Naive thymus-derived CD4-positive, alpha-beta T cell (primary cell): ENCODE measurements at regions of chr1 and their contacts with region 1.

Region 1: GRCh38 chr1:169809370-169810095 is 14.8 kb upstream of the METTL18 start:
- DNase-seq: peak in 6 of 9 donors; percentile 3 to 44 (median 33)
- ATAC-seq: peak; percentile 65
- H3K4me3 ChIP-seq: no peak overlapping the region
- H3K4me3 Mint-ChIP-seq: no peak overlapping the region
- H3K27ac ChIP-seq: no peak overlapping the region
- H3K27ac Mint-ChIP-seq: no peak overlapping the region
- H3K4me1 ChIP-seq: no peaks in the 10 kb centered on the region
- H3K4me1 Mint-ChIP-seq: peaks cover 0 to 16% (median 0%) of the 10 kb centered on the region in 7 donors
- H3K27me3 ChIP-seq: no peaks in the 10 kb centered on the region
- H3K27me3 Mint-ChIP-seq: no peaks in the 10 kb centered on the region

Region 2: DNA sequence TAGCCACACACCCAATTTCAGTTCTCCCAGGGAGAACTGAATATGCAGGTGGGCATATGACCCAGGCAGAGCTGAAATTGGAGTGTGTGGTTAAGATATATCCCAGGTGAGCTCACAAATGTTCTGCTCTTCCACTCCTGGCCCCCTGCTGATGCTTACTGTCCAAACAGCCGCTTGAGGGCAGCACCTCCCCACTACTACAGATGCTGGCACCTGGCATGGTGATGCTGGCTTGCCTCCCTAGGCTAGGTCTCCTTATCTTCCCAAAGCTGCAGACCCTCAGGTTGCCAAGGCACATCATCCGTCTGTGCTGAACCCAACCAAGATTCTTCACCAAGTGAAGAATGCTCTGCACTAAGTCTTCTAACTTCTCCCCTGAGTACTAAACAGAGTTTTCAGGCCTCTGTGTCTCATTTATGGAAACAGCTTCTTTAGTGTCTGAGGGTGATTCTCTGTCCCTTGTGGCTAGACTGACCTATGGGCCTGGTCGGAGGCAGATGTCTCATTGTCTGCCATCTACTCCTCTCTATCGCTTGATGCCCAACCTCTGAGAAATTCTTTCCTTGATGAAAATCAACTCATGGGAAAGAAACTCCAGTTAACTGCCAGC is 1205.9 kb before region 1 on chr1:
- CTCF ChIA-PET with region 1: no interaction called
- POLR2A ChIA-PET with region 1: no interaction called
- intact Hi-C with region 1: loop called in 1 of 2 experiments (anchors 5 kb)
- DNase-seq: peak; percentile 42 to 72 (median 58)
- ATAC-seq: peak; percentile 89
- H3K4me3 ChIP-seq: no peak overlapping the region
- H3K4me3 Mint-ChIP-seq: no peak overlapping the region
- H3K27ac ChIP-seq: no peak overlapping the region
- H3K27ac Mint-ChIP-seq: no peak overlapping the region
- H3K4me1 ChIP-seq: no peaks in the 10 kb centered on the region
- H3K4me1 Mint-ChIP-seq: peaks cover 0 to 7% (median 0%) of the 10 kb centered on the region in 7 donors
- H3K27me3 ChIP-seq: peaks cover 0 to 4% of the 10 kb centered on the region in 2 donors
- H3K27me3 Mint-ChIP-seq: peaks cover 0 to 30% (median 1%) of the 10 kb centered on the region in 5 donors

Region 3: DNA sequence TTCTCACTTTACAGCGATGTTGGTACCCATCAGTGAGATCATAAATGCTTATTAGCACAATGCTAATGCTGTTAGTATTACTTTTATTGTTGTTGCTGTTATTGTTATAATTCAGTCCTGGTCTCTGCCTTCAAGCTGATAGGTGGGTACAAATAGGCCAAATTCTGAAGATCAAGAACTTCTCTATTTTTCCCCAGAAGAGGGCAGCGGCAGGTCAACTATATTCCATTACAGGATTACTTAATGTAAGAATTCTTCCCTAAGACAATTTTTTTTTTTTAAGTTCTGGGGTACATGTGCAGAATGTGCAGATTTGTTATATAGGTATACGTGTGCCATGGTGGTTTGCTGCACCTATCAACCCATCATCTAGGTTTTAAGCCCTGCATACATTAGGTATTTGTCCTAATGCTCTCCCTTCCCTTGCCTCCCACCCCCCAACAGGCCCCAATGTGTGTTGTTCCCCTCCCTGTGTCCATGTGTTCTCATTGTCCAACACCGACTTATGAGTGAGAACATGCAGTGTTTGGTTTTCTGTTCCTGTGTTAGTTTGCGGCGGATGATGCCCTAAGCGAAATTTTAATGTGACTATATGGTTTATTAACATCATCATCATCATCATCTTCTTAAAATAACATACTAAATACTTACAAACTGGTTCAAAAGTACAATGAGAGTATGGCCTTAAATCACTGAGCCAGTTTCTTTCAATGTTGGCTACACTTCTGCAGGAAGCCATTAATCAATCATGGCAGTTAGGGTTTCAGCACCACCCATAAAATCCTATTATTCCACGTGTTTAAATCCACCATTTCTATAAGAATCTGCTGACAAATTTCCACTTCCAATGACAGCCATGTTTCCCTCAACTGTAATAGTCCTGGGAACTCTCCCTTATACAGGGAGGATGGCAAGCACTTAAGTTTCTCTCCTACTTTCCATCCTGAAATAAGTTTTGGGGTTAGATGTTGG is 343.0 kb before region 1 on chr1:
- CTCF ChIA-PET with region 1: no interaction called
- POLR2A ChIA-PET with region 1: no interaction called
- intact Hi-C with region 1: loop called in 1 of 2 experiments (anchors 1 kb)
- DNase-seq: peak in 3 of 9 donors; percentile 10 to 18 (median 18)
- ATAC-seq: no peak
- H3K4me3 ChIP-seq: no peak overlapping the region
- H3K4me3 Mint-ChIP-seq: no peak overlapping the region
- H3K27ac ChIP-seq: no peak overlapping the region
- H3K27ac Mint-ChIP-seq: peak overlapping the region in 1 of 9 donors; percentile 27
- H3K4me1 ChIP-seq: no peaks in the 10 kb centered on the region
- H3K4me1 Mint-ChIP-seq: peaks cover 0 to 6% (median 5%) of the 10 kb centered on the region in 7 donors
- H3K27me3 ChIP-seq: no peaks in the 10 kb centered on the region
- H3K27me3 Mint-ChIP-seq: peaks cover 0 to under 1% (median 0%) of the 10 kb centered on the region in 5 donors

Region 4: GRCh38 chr1:169509351-169509750 is 300.2 kb before region 1 on chr1:
- CTCF ChIA-PET with region 1: no interaction called
- POLR2A ChIA-PET with region 1: no interaction called
- intact Hi-C with region 1: loop called in 1 of 2 experiments (anchors 1 kb)
- DNase-seq: no peak
- ATAC-seq: no peak
- H3K4me3 ChIP-seq: no peak overlapping the region
- H3K4me3 Mint-ChIP-seq: no peak overlapping the region
- H3K27ac ChIP-seq: no peak overlapping the region
- H3K27ac Mint-ChIP-seq: no peak overlapping the region
- H3K4me1 ChIP-seq: peaks cover 0 to 9% of the 10 kb centered on the region in 2 donors
- H3K4me1 Mint-ChIP-seq: peaks cover 0 to 19% (median 12%) of the 10 kb centered on the region in 7 donors
- H3K27me3 ChIP-seq: no peaks in the 10 kb centered on the region
- H3K27me3 Mint-ChIP-seq: no peaks in the 10 kb centered on the region

Region 5: GRCh38 chr1:169546087-169546995 is 263.2 kb before region 1 on chr1:
- CTCF ChIA-PET with region 1: interaction called, 70 read pairs
- POLR2A ChIA-PET with region 1: no interaction called
- intact Hi-C with region 1: loop called (anchors 1 kb)
- DNase-seq: peak in 7 of 9 donors; percentile 40 to 73 (median 68)
- ATAC-seq: peak; percentile 92
- H3K4me3 ChIP-seq: no peak overlapping the region
- H3K4me3 Mint-ChIP-seq: no peak overlapping the region
- H3K27ac ChIP-seq: no peak overlapping the region
- H3K27ac Mint-ChIP-seq: peak overlapping the region in 1 of 9 donors; percentile 7
- H3K4me1 ChIP-seq: no peaks in the 10 kb centered on the region
- H3K4me1 Mint-ChIP-seq: peaks cover 0 to 14% (median 0%) of the 10 kb centered on the region in 7 donors
- H3K27me3 ChIP-seq: no peaks in the 10 kb centered on the region
- H3K27me3 Mint-ChIP-seq: no peaks in the 10 kb centered on the region

Region 6: DNA sequence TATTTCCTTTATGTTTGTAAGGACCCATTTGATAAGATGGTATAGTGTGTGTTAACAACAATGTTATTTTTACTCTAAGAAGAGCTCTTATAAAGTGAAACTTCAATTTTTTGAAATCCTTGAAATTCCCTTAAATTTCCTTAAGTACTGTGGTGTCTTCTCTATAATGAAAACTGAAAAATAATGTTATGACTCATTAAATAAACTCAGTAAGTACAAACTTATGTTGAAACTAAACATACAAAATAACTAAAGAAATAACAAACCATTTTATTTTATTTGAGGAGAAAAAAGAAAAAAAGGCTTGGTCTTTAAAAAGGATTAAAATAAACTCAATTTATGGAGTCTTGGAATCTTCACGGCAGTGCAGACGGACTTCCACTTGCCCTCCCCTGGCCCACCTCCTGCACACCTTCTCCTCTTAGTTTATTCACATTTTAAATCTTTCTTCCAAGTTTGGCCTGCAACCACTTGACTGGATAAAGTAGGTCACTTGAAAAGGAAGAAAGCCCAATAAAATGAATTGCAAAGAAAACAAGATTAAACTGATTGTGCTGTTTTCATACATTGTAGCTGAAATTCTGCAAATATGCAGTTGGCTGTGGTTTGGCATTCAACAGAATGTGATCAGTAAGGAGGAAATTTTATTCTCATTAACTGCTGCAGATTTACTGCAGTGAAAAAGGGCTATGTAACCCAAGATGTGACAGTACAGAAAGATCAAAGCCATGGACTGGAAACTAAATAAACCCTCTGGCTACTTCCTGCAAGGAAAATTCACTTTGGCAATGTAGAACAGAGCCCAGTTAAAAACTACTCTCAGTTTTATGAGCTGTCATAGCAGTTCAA is 132.7 kb after region 1 on chr1:
- CTCF ChIA-PET with region 1: no interaction called
- POLR2A ChIA-PET with region 1: no interaction called
- intact Hi-C with region 1: no loop called
- DNase-seq: no peak
- ATAC-seq: no peak
- H3K4me3 ChIP-seq: no peak overlapping the region
- H3K4me3 Mint-ChIP-seq: no peak overlapping the region
- H3K27ac ChIP-seq: no peak overlapping the region
- H3K27ac Mint-ChIP-seq: no peak overlapping the region
- H3K4me1 ChIP-seq: no peaks in the 10 kb centered on the region
- H3K4me1 Mint-ChIP-seq: no peaks in the 10 kb centered on the region
- H3K27me3 ChIP-seq: no peaks in the 10 kb centered on the region
- H3K27me3 Mint-ChIP-seq: no peaks in the 10 kb centered on the region